ENCODE measurements at regions of chr7 and their contacts with region 1.

Region 1: GRCh38 chr7:108181073-108181985 is 51.2 kb upstream of the LAMB4 start:
- DNase-seq: no peak
- H3K4me3 ChIP-seq: no peak overlapping the region
- H3K27ac ChIP-seq: no peak overlapping the region
- H3K4me1 ChIP-seq: no peaks in the 10 kb centered on the region
- H3K27me3 ChIP-seq: no peaks in the 10 kb centered on the region
- CTCF ChIP-seq: peak; percentile 17 to 70 (median 65)

Region 2: GRCh38 chr7:108497082-108497725 is 315.9 kb after region 1 on chr7:
- intact Hi-C with region 1: loop called (anchors 5 kb)
- DNase-seq: no peak
- H3K4me3 ChIP-seq: no peak overlapping the region
- H3K27ac ChIP-seq: no peak overlapping the region
- H3K4me1 ChIP-seq: no peaks in the 10 kb centered on the region
- H3K27me3 ChIP-seq: no peaks in the 10 kb centered on the region
- CTCF ChIP-seq: peak; percentile 52 to 79 (median 79)

Measured in ascending aorta (tissue), 2 donors.